ENCODE measurements at regions of chr1 and their contacts with region 1.

Region 1: GRCh38 chr1:44985747-44986359 is 542 bp downstream of the EIF2B3 start:
- DNase-seq: no peak
- H3K4me3 Mint-ChIP-seq: peak overlapping the region; percentile 100
- H3K27ac Mint-ChIP-seq: peak overlapping the region; percentile 94
- H3K4me1 Mint-ChIP-seq: peaks cover 21% of the 10 kb centered on the region
- H3K27me3 Mint-ChIP-seq: peaks cover 2% of the 10 kb centered on the region

Region 2: GRCh38 chr1:44721485-44722361 is 264.1 kb before region 1 on chr1:
- intact Hi-C with region 1: loop called (anchors 5 kb)
- DNase-seq: peak; percentile 75
- H3K4me3 Mint-ChIP-seq: peak overlapping the region; percentile 77
- H3K27ac Mint-ChIP-seq: peak overlapping the region; percentile 97
- H3K4me1 Mint-ChIP-seq: peaks cover 71% of the 10 kb centered on the region
- H3K27me3 Mint-ChIP-seq: no peaks in the 10 kb centered on the region

Region 3: DNA sequence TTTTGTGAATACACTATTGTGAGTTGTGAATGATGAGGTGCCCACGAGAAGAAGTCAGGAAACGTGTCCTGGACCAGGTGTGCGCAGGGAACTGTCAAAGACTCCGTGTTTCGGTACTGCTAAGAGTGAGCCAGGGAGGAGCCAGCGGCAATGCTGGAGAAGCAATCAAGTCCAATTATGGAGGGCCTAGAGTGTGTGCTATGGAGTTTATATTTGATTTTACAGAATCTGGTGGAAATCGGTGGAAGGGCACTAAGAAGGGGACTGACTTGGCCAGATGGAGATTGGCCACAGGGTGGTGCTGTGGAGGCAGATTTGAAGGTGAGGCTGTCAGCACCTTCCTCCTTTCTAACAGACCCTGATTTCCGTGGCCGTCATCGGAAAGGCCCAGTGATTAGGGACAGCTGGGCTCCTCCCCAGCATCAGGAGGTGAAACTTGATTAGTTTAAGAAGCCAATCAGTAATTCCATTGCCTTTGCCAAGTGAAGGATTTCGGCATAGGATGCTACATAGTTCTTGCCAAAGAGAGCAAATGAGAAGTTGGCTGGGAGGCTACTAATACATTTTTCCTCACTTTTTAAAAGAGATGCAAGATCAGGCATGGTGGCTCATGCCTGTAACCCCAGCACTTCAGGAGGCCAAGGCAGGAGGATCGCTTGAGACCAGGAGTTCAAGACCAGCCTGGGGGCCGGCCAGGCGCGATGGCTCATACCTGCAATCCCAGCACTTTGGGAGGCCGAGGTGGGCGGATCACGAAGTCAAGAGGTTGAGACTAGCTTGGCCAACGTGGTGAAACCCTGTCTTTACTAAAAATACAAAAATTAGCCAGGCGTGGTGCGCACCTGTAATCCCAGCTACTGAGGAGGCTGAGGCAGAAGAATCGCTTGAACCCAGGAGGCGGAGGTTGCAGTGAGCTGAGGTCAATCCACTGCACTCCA is 149.8 kb before region 1 on chr1:
- intact Hi-C with region 1: loop called (anchors 5 kb)
- DNase-seq: peak; percentile 71
- H3K4me3 Mint-ChIP-seq: peak overlapping the region; percentile 26
- H3K27ac Mint-ChIP-seq: no peak overlapping the region
- H3K4me1 Mint-ChIP-seq: peaks cover 9% of the 10 kb centered on the region
- H3K27me3 Mint-ChIP-seq: peaks cover 4% of the 10 kb centered on the region

Region 4: GRCh38 chr1:44941424-44942324 is 44.2 kb before region 1 on chr1:
- intact Hi-C with region 1: loop called (anchors 2 kb)
- DNase-seq: no peak
- H3K4me3 Mint-ChIP-seq: no peak overlapping the region
- H3K27ac Mint-ChIP-seq: peak overlapping the region; percentile 80
- H3K4me1 Mint-ChIP-seq: peaks cover 20% of the 10 kb centered on the region
- H3K27me3 Mint-ChIP-seq: no peaks in the 10 kb centered on the region

Measured in activated T-helper 1 cell treated with anti-CD3 and anti-CD28 coated beads, Interleukin-12 subunit alpha, Interleukin-12 subunit beta, Interleukin-2, Interleukin-4 antibody, amounts not matched to agents 30 ng/mL and 10 ng/mL and 1 ng/mL, durations not matched to agents 14 hours and 24 hours and 36 hours (primary cell).